HAP-1 (cell line): ENCODE measurements at regions of chr9 and their contacts with region 1.

Region 1: GRCh38 chr9:123544007-123544827 is 188.2 kb downstream of the CRB2 start:
- DNase-seq: peak; percentile 24 to 52
- H3K4me3 ChIP-seq: no peak overlapping the region
- H3K4me1 ChIP-seq: peaks cover 6% of the 10 kb centered on the region
- H3K27me3 ChIP-seq: no peaks in the 10 kb centered on the region; the same call in 1 of the 2 replicates

Region 2: DNA sequence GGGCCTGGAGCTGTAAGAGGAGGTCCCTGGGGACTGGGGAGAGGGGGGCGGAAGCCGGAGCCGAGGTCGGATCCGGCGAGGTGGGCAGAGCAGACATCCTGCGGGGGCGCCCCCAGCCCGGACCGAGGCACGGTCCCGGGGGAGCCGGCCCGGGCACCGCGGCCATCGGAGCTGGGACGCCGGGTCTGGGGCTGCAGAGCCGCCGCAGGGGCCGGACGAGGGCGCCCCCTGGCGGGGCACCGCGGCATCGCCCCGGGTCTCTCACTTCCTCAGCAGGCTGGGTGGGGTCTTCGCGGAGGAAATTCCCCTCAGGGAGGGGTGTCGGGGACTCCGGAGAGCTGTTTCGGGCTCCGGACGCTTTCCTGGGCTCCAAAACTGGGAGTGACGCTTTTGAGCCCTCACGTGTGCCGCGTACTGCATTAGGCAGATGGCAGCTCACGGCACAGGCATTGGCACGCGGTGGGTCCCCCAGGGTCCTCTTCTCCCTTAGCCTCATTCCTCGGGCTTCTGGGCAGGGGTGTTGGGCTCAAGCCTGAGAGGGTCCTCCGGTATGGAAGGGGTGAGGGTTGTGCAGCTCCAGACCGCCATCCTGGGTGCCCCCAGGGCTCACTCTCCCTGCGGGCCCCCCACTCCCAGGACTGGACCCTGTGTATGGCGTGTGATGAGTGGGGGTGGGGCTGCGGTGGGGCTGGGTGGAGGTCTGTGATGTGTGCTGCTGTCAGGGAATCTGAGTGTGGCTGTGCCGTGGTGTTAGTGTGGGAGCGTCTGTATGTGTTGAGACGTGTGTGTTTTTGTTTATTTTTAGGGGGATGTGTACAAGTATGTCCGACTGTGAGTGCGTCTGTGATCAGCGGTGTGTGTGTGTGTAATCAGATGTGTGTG is 497.0 kb after region 1 on chr9:
- in situ Hi-C with region 1: loop called (anchors 10 kb)
- DNase-seq: peak in 1 of 2 experiments; percentile 75
- H3K4me3 ChIP-seq: peak overlapping the region; percentile 27
- H3K4me1 ChIP-seq: peaks cover 3% of the 10 kb centered on the region; the same call in 1 of the 2 replicates
- H3K27me3 ChIP-seq: peaks cover 3% of the 10 kb centered on the region; the same call in 1 of the 2 replicates

Region 3: DNA sequence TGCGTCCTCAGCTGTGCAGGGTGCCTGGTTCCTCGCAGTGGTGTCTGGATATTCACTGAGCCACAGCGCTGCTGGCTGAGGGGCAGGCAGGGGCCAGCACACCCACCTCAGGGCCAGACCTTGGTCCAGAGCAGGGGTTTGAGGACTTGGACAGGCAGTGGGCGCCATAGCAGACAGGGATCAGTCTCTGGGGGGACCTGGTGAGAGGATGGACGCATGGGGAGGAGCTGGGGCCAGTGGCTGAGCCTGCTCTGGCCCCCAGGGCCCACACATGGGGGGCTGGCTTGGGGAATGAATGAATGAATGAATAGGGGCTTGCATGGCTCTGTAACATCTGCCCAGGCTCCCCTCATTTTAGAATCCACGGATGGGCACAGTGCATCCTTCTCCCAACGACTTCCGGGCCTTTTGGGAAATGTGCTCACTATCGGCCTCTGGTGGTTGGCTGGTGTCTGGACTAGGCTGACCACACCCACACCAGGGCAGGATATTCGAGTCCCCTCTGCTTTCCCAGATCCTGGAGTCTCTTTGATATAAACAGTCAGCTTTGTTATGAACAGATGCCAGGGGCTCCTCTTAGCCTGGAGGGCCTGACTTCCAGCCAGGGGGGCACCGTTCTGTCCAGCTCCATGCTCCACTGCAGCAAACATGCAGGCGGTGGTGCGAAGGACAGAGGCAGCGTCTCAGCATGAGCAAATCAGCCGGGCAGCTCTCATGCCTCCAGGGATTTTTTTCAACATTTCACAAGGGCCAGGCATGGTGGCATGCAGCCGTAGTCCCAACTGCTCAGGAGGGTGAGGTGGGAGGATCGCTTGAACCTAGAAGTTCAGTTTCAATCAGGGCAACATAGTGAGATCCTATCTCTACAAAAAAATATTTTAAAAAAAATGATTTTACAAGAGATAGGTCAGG is 776.1 kb after region 1 on chr9:
- in situ Hi-C with region 1: loop called (anchors 25 kb)
- DNase-seq: peak; percentile 55 to 87
- H3K4me3 ChIP-seq: no peak overlapping the region
- H3K4me1 ChIP-seq: no peaks in the 10 kb centered on the region
- H3K27me3 ChIP-seq: no peaks in the 10 kb centered on the region